ENCODE measurements at regions of chr6 and their contacts with region 1.

Region 1: GRCh38 chr6:154410619-154411072 is 54.0 kb upstream of the IPCEF1 start:
- DNase-seq: peak; percentile 91
- H3K4me3 ChIP-seq: no peak overlapping the region; the same call in 1 of the 2 replicates
- H3K27ac ChIP-seq: peak overlapping the region; percentile 96
- H3K27me3 ChIP-seq: no peaks in the 10 kb centered on the region
- CTCF ChIP-seq: no peak

Region 2: GRCh38 chr6:154572556-154572955 is 161.9 kb after region 1 on chr6:
- CTCF ChIA-PET with region 1: no interaction called
- POLR2A ChIA-PET with region 1: interaction called, 13 read pairs
- DNase-seq: no peak
- H3K4me3 ChIP-seq: no peak overlapping the region
- H3K27ac ChIP-seq: no peak overlapping the region
- H3K27me3 ChIP-seq: peaks cover 4% of the 10 kb centered on the region
- CTCF ChIP-seq: no peak